Activated CD4-positive, alpha-beta memory T cell treated with anti-CD3 and anti-CD28 coated beads, Interleukin-2, amount 10 ng/mL, durations not matched to agents 7 days and 5 days (primary cell): ENCODE measurements at regions of chr19 and their contacts with region 1.

Region 1: DNA sequence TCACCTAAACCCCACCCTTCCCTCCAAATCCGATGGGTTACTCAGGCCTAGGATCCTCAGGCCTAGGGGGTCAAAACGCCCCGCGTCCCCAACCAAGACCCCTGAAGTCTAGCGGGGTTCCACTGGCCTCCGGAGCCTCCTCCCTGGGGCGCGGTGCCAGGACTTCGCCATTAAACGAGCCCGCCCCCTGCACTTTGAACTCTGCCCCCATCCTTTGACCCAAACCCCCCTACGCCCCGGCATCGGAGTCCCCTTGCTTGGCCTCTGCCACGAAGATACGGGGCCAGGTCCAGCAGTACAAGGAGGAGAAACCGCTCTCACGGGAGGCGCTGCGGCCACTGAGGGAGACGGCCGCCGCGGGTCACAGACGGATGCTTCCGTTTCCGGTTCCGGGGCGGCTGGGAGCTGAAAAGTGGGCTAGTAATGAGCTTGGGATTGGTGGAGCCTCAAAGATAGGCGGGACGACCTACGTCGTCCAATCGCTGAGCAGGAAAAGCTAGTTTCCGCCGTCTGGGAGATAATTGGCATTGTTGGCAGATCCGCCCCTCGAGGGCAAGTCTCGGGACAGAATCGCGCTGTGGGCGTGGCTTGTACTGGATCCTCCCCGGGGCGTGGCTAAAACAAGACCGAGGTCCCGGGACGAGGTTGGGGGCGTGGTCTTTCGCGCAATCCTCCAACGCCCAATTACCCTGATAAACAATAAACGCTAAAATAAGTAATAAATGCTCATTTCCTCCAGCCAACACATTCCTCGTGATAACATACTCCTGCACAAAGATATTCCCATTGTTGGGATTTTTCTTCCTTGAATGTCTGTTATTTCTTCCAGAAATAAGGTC is 5.7 kb upstream of the ZNF77 start:
- DNase-seq: peak; percentile 100
- H3K4me3 Mint-ChIP-seq: peak overlapping the region; percentile 94
- H3K27ac Mint-ChIP-seq: peak overlapping the region; percentile 91
- H3K4me1 Mint-ChIP-seq: peaks cover 37% of the 10 kb centered on the region
- H3K27me3 Mint-ChIP-seq: no peaks in the 10 kb centered on the region

Region 2: GRCh38 chr19:2887391-2887914 is 63.1 kb before region 1 on chr19:
- CTCF ChIA-PET with region 1: interaction called, 16 read pairs
- POLR2A ChIA-PET with region 1: interaction called, 9 read pairs
- DNase-seq: no peak
- H3K4me3 Mint-ChIP-seq: no peak overlapping the region
- H3K27ac Mint-ChIP-seq: no peak overlapping the region
- H3K4me1 Mint-ChIP-seq: peaks cover 6% of the 10 kb centered on the region
- H3K27me3 Mint-ChIP-seq: no peaks in the 10 kb centered on the region

Region 3: GRCh38 chr19:2962045-2962561 is 11.6 kb after region 1 on chr19:
- CTCF ChIA-PET with region 1: interaction called, 15 read pairs
- POLR2A ChIA-PET with region 1: interaction called, 7 read pairs
- DNase-seq: peak; percentile 54
- H3K4me3 Mint-ChIP-seq: peak overlapping the region; percentile 48
- H3K27ac Mint-ChIP-seq: no peak overlapping the region
- H3K4me1 Mint-ChIP-seq: peaks cover 5% of the 10 kb centered on the region
- H3K27me3 Mint-ChIP-seq: no peaks in the 10 kb centered on the region

Region 4: DNA sequence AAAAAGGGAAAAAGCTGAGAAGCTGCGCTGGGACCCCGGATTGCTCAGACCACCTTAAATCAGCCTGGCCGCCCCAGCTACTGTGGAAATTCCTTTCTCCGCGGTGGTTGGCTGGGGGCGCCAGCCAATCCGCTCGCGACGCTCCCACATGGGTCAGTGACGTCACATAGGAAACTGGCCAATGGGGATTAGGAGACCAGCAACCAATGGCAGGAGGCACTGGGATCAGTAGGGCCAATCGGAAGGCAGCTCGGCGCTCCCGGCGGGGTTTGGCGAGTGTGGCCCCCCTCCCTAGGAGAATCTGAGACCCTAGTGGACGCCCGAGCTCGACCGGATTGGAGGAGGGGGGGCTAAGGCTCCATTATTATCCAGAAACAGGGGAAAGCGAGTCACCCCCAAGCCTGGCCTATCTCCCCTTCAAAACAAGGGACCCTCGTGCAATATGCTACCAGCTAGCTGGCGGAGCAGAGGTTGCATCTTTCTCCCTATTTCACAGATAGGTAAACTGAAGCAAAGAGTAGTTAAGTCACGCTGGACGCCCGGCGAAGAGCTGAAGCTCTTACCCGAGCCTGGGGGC is 85.1 kb after region 1 on chr19:
- CTCF ChIA-PET with region 1: interaction called, 20 read pairs
- POLR2A ChIA-PET with region 1: interaction called, 7 read pairs
- DNase-seq: peak; percentile 96
- H3K4me3 Mint-ChIP-seq: peak overlapping the region; percentile 83
- H3K27ac Mint-ChIP-seq: peak overlapping the region; percentile 91
- H3K4me1 Mint-ChIP-seq: peaks cover 23% of the 10 kb centered on the region
- H3K27me3 Mint-ChIP-seq: peaks cover 25% of the 10 kb centered on the region

Region 5: GRCh38 chr19:3125900-3126524 is 175.5 kb after region 1 on chr19:
- CTCF ChIA-PET with region 1: interaction called, 22 read pairs
- POLR2A ChIA-PET with region 1: no interaction called
- DNase-seq: peak; percentile 68
- H3K4me3 Mint-ChIP-seq: no peak overlapping the region
- H3K27ac Mint-ChIP-seq: no peak overlapping the region
- H3K4me1 Mint-ChIP-seq: peaks cover 21% of the 10 kb centered on the region
- H3K27me3 Mint-ChIP-seq: no peaks in the 10 kb centered on the region

Region 6: GRCh38 chr19:3275583-3276340 is 325.3 kb after region 1 on chr19:
- CTCF ChIA-PET with region 1: interaction called, 10 read pairs
- POLR2A ChIA-PET with region 1: interaction called, 3 read pairs
- DNase-seq: peak; percentile 92
- H3K4me3 Mint-ChIP-seq: peak overlapping the region; percentile 76
- H3K27ac Mint-ChIP-seq: peak overlapping the region; percentile 61
- H3K4me1 Mint-ChIP-seq: peaks cover 20% of the 10 kb centered on the region
- H3K27me3 Mint-ChIP-seq: peaks cover 13% of the 10 kb centered on the region